GM12878 (cell line): ENCODE measurements at regions of chr3 and their contacts with region 1.

Region 1: DNA sequence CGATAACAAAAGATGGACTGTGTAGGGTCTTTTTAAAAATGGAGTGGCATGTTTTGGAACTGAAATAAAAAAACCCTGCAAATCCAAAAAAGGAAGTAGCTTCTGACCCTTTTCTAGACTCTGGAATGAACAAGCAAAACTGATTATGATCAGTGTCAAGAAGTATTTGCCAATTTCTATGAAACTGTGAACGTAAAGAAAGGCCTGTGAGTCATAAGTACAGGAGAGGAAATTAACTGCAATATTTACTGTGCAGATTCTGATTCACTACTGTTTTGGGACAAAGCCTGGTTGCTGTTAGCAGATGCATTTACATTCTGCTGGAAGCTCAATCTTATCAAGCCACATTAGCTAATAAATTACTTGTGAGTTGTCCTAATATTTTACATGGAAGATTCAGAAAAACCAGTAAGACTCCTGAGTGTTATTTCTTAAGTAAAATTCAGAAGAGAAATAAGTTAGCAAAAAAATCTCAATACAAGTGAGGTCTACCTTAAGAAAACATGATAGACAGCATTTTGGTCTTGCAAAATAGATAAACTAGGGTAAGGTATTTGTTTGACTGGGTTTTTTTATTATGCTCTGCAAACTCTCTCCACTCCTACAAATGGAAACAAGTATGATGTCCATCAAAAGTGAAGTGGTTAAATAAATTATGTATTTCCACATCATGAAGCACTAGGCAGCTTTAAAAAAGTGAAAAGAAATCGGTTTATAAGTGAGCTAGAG is 90.2 kb upstream of the LMOD3 start:
- DNase-seq: no peak
- ATAC-seq: peak; percentile 92
- H3K4me3 ChIP-seq: no peak overlapping the region
- H3K27ac ChIP-seq: no peak overlapping the region
- H3K4me1 ChIP-seq: no peaks in the 10 kb centered on the region
- H3K27me3 ChIP-seq: no peaks in the 10 kb centered on the region
- CTCF ChIP-seq: no peak
- EP300 ChIP-seq: peak; percentile 24 to 27; a peak in 1 of 4 replicates
- POLR2A ChIP-seq: no peak
- RAD21 ChIP-seq: no peak

Region 2: DNA sequence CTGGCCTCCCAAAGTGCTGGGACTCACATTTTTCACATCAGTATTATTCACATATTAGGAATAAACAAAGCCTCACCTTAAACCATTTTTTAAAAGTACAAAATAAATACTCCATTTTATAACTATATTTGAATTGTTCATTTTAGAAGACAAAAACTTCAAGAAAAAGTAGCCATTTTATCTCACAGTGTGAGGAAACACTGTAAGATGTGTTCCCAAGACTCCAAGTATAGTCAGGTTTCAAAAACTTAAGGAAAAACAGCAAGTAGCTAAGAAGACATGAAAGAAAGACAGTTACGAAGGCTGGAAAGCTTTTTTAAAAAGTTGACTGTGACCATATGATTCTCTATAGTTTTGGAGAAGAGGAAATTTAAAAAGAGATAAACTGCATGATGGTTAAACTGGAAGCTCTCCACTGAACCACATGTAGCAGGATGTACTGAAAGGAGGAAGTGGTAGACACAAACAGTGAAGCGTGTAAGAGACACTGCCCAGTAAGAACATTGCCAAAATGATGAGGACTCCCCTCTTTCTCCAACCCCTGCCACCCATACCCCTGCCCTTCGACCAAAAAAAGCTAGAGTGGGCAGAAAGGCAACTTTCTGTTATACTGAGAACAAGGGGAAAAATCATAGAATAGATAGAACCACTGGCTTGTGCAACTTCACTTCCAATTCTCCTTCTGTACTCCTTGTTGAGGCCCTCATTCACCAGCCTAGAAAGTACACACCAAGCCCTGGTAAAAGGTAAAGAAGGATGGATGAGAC is 154.2 kb before region 1 on chr3:
- CTCF ChIA-PET with region 1: no interaction called
- POLR2A ChIA-PET with region 1: no interaction called
- RAD21 ChIA-PET with region 1: no interaction called
- SMC1A ChIA-PET with region 1: no interaction called
- in situ Hi-C with region 1: no loop called
- intact Hi-C with region 1: no loop called
- DNase-seq: no peak
- ATAC-seq: peak; percentile 99
- H3K4me3 ChIP-seq: peak overlapping the region; percentile 31; the same call in 1 of the 2 replicates
- H3K27ac ChIP-seq: peak overlapping the region; percentile 82
- H3K4me1 ChIP-seq: peaks cover 10% of the 10 kb centered on the region
- H3K27me3 ChIP-seq: no peaks in the 10 kb centered on the region
- CTCF ChIP-seq: no peak
- EP300 ChIP-seq: no peak
- POLR2A ChIP-seq: no peak
- RAD21 ChIP-seq: no peak

Region 3: DNA sequence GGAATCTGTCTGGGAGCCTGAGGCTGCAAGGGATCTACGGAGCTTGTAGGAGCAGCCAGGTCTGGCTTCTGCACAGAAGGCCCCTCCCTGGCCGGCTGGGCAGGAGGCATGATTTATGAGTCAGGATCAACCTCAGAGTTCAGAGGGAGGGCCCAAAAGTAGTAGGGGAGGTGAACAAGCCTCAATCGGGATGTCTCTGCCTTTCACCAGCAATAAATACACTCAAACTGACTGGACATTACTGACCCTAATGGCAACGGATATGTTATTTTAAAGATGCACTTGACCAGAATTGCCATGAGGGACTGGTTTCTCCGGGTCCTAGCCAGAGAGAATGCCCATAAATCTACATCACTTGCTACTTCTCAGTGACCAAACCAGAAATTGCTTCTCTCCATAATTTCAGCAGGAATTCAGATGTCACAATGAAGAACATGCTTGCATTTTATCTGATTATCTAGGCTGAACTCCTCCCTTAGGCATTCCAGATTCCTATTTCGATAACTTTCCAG is 19.4 kb after region 1 on chr3:
- CTCF ChIA-PET with region 1: interaction called, 12 read pairs
- POLR2A ChIA-PET with region 1: interaction called, 13 read pairs
- RAD21 ChIA-PET with region 1: interaction called, 8 read pairs
- SMC1A ChIA-PET with region 1: interaction called, 17 read pairs
- in situ Hi-C with region 1: no loop called
- intact Hi-C with region 1: no loop called
- DNase-seq: no peak
- ATAC-seq: no peak
- H3K4me3 ChIP-seq: no peak overlapping the region
- H3K27ac ChIP-seq: no peak overlapping the region
- H3K4me1 ChIP-seq: no peaks in the 10 kb centered on the region
- H3K27me3 ChIP-seq: no peaks in the 10 kb centered on the region
- CTCF ChIP-seq: no peak
- EP300 ChIP-seq: no peak
- POLR2A ChIP-seq: no peak
- RAD21 ChIP-seq: no peak